Endothelial cell of umbilical vein (primary cell): ENCODE measurements at regions of chr2 and their contacts with region 1.

Region 1: GRCh38 chr2:64000630-64001381 is 18.4 kb downstream of the VPS54 start:
- DNase-seq: no peak
- H3K4me3 ChIP-seq: no peak overlapping the region
- H3K27ac ChIP-seq: no peak overlapping the region
- H3K4me1 ChIP-seq: no peaks in the 10 kb centered on the region
- H3K27me3 ChIP-seq: no peaks in the 10 kb centered on the region
- CTCF ChIP-seq: peak in 1 of 2 donors; percentile 24
- POLR2A ChIP-seq: no peak

Region 2: GRCh38 chr2:64434039-64434657 is 433.3 kb after region 1 on chr2:
- CTCF ChIA-PET with region 1: no interaction called
- POLR2A ChIA-PET with region 1: no interaction called
- dilution Hi-C with region 1: no loop called
- intact Hi-C with region 1: no loop called
- DNase-seq: no peak
- H3K4me3 ChIP-seq: no peak overlapping the region
- H3K27ac ChIP-seq: no peak overlapping the region
- H3K4me1 ChIP-seq: no peaks in the 10 kb centered on the region
- H3K27me3 ChIP-seq: peaks cover 23 to 28% of the 10 kb centered on the region in 2 experiments
- CTCF ChIP-seq: no peak
- POLR2A ChIP-seq: no peak

Region 3: DNA sequence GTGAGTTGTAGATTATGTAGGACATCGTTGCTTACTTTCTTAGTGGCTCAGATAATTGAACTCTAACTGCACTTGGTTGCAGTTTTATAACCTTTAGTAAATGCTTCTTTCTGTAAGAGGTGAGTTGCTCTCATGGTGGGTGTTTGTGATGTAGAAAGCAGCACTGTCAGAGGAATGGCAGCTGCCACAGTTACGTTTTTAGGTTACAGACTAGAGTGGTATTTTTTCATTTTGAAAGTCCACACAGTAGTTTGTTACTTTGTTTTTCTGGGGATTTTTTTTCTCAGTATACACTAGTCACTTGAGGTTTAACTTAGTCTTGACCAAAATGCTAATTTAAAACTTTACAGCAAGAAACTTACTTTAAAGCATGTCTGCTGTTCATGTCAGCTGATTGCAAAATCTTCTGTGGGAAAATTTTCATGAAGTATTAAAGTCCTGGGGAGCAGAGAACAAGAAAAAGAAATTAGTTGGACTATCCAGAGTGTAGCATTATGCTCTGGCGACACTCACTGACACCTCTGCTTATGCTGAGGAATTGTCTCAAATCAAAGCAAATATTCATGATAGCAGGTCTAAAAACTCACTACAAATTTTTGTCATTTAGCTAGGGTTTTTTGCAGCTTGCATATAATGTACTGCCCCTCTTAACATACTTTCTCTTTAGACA is 538.1 kb after region 1 on chr2:
- CTCF ChIA-PET with region 1: no interaction called
- POLR2A ChIA-PET with region 1: interaction called, 14 read pairs
- dilution Hi-C with region 1: no loop called
- intact Hi-C with region 1: no loop called
- DNase-seq: no peak
- H3K4me3 ChIP-seq: no peak overlapping the region
- H3K27ac ChIP-seq: no peak overlapping the region
- H3K4me1 ChIP-seq: no peaks in the 10 kb centered on the region
- H3K27me3 ChIP-seq: no peaks in the 10 kb centered on the region
- CTCF ChIP-seq: no peak
- POLR2A ChIP-seq: no peak